Activated CD4-positive, alpha-beta T cell treated with anti-CD3 and anti-CD28 coated beads for 36 hours (primary cell): ENCODE measurements at regions of chr6 and their contacts with region 1.

Region 1: DNA sequence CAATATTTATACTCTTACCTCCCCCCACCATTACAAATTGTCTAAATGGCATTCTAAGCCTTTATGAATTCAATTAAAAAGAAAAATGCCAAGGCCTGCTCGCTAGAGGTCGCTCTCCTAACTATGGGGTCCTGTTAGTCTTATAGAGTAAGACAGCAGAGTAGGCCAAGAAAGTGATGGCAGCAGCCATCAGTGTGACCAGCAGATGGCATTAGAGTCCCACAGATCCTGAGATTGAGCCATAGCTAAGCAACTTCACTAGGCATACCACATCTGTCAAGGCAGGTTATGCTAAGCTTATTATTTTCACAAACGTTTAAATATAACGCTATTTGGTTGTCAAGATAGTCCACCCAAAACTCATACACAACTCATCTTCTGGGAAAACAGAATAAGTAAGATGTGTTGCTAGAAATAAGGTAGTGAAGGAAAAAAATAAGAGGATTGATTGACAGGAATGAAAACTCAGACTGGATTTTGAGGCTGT is 57.6 kb upstream of the SCAF8 start:
- DNase-seq: peak; percentile 91
- ATAC-seq: peak; percentile 100
- H3K4me3 Mint-ChIP-seq: no peak overlapping the region
- H3K27ac Mint-ChIP-seq: no peak overlapping the region
- H3K4me1 Mint-ChIP-seq: no peaks in the 10 kb centered on the region
- H3K27me3 Mint-ChIP-seq: no peaks in the 10 kb centered on the region

Region 2: GRCh38 chr6:153840039-153840850 is 835.4 kb before region 1 on chr6:
- CTCF ChIA-PET with region 1: no interaction called
- POLR2A ChIA-PET with region 1: no interaction called
- intact Hi-C with region 1: no loop called
- DNase-seq: no peak
- ATAC-seq: no peak
- H3K4me3 Mint-ChIP-seq: no peak overlapping the region
- H3K27ac Mint-ChIP-seq: no peak overlapping the region
- H3K4me1 Mint-ChIP-seq: no peaks in the 10 kb centered on the region
- H3K27me3 Mint-ChIP-seq: peaks cover 3% of the 10 kb centered on the region

Region 3: GRCh38 chr6:154488802-154489437 is 186.7 kb before region 1 on chr6:
- CTCF ChIA-PET with region 1: no interaction called
- POLR2A ChIA-PET with region 1: no interaction called
- intact Hi-C with region 1: no loop called
- DNase-seq: no peak
- ATAC-seq: no peak
- H3K4me3 Mint-ChIP-seq: no peak overlapping the region
- H3K27ac Mint-ChIP-seq: no peak overlapping the region
- H3K4me1 Mint-ChIP-seq: no peaks in the 10 kb centered on the region
- H3K27me3 Mint-ChIP-seq: no peaks in the 10 kb centered on the region

Region 4: GRCh38 chr6:154619146-154619545 is 56.5 kb before region 1 on chr6:
- CTCF ChIA-PET with region 1: no interaction called
- POLR2A ChIA-PET with region 1: no interaction called
- intact Hi-C with region 1: no loop called
- DNase-seq: no peak
- ATAC-seq: no peak
- H3K4me3 Mint-ChIP-seq: no peak overlapping the region
- H3K27ac Mint-ChIP-seq: no peak overlapping the region
- H3K4me1 Mint-ChIP-seq: peaks cover 3% of the 10 kb centered on the region
- H3K27me3 Mint-ChIP-seq: peaks cover 4% of the 10 kb centered on the region

Region 5: GRCh38 chr6:154664287-154664686 is 11.4 kb before region 1 on chr6:
- CTCF ChIA-PET with region 1: interaction called, 16 read pairs
- POLR2A ChIA-PET with region 1: no interaction called
- intact Hi-C with region 1: no loop called
- DNase-seq: no peak
- ATAC-seq: no peak
- H3K4me3 Mint-ChIP-seq: no peak overlapping the region
- H3K27ac Mint-ChIP-seq: no peak overlapping the region
- H3K4me1 Mint-ChIP-seq: no peaks in the 10 kb centered on the region
- H3K27me3 Mint-ChIP-seq: peaks cover 4% of the 10 kb centered on the region

Region 6: GRCh38 chr6:154703084-154703483 is 27.4 kb after region 1 on chr6:
- CTCF ChIA-PET with region 1: interaction called, 16 read pairs
- POLR2A ChIA-PET with region 1: no interaction called
- intact Hi-C with region 1: no loop called
- DNase-seq: no peak
- ATAC-seq: no peak
- H3K4me3 Mint-ChIP-seq: no peak overlapping the region
- H3K27ac Mint-ChIP-seq: no peak overlapping the region
- H3K4me1 Mint-ChIP-seq: no peaks in the 10 kb centered on the region
- H3K27me3 Mint-ChIP-seq: peaks cover 9% of the 10 kb centered on the region

Region 7: GRCh38 chr6:154805288-154805911 is 129.8 kb after region 1 on chr6:
- CTCF ChIA-PET with region 1: interaction called, 133 read pairs
- POLR2A ChIA-PET with region 1: interaction called, 3 read pairs
- intact Hi-C with region 1: loop called (anchors 1 kb)
- DNase-seq: no peak
- ATAC-seq: no peak
- H3K4me3 Mint-ChIP-seq: no peak overlapping the region
- H3K27ac Mint-ChIP-seq: no peak overlapping the region
- H3K4me1 Mint-ChIP-seq: peaks cover 3% of the 10 kb centered on the region
- H3K27me3 Mint-ChIP-seq: no peaks in the 10 kb centered on the region

Region 8: GRCh38 chr6:154928325-154928922 is 252.8 kb after region 1 on chr6:
- CTCF ChIA-PET with region 1: interaction called, 26 read pairs
- POLR2A ChIA-PET with region 1: no interaction called
- intact Hi-C with region 1: loop called (anchors 1 to 2 kb)
- DNase-seq: peak; percentile 82
- ATAC-seq: peak; percentile 84
- H3K4me3 Mint-ChIP-seq: no peak overlapping the region
- H3K27ac Mint-ChIP-seq: no peak overlapping the region
- H3K4me1 Mint-ChIP-seq: peaks cover 14% of the 10 kb centered on the region
- H3K27me3 Mint-ChIP-seq: no peaks in the 10 kb centered on the region